HepG2 (cell line): ENCODE measurements at regions of chr14 and their contacts with region 1.

Region 1: DNA sequence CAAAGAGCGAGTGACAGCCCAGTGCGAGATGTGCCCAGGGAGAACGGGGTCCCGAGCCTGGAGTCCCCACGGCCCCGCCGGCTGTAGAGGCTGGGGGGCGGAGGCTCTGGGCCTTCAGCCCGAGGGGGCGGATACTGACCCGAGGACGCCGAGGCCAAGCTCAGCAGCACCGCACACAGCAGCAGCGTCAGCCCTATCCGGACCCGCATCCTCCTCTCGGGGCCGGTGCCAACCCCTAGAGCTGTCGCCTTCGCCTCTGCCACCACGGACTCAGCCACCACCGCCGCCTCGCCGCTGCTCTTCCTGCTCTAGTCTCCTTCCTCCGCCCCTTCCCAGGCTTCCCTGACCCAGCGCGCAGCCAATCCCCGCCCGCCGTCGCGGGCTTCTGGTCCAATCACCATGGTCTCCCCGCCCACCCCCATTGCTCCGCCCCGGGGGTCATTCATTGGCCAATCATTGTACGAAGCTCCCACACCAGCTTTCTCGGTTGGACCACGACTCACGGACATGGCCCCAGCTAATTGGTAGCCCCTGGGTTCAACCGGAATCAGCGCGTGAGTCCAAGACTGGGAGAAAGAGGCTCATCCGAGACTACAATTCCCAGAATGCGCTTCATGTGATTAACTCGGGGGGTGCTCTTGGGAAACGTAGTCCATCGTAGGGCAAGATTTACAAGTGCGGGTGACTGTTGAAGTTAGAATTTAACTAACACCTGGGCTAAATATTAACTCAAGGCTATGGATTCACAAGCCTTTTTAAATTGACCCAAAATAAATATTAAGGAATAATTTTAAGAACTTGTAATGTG is at the start of gene SEL1L:
- DNase-seq: peak; percentile 100
- ATAC-seq: peak; percentile 97
- H3K4me3 ChIP-seq: peak within 1 kb of the TSS; percentile 80 to 99 (median 83)
- H3K27ac ChIP-seq: peak within 1 kb of the TSS; percentile 72
- H3K4me1 ChIP-seq: peaks cover 73% of the 10 kb centered on the region
- H3K27me3 ChIP-seq: no peaks in the 10 kb centered on the region; a peak in 1 of 5 replicates
- CTCF ChIP-seq: no peak
- EP300 ChIP-seq: 0 out of 4 replicates have a peak, but pooled peaks of 1 of the 2 experiments have one; percentile 22
- POLR2A ChIP-seq: peak; percentile 93 to 95
- RAD21 ChIP-seq: peak; percentile 55; the same call in 1 of the 2 replicates
- total RNA-seq, gene SEL1L: 38.1 and 61.0 TPM in 2 replicates

Region 2: GRCh38 chr14:81423504-81423903 is 110.2 kb before region 1 on chr14:
- CTCF ChIA-PET with region 1: no interaction called
- POLR2A ChIA-PET with region 1: no interaction called
- in situ Hi-C with region 1: no loop called
- intact Hi-C with region 1: no loop called
- DNase-seq: no peak
- ATAC-seq: no peak
- H3K4me3 ChIP-seq: no peak overlapping the region
- H3K27ac ChIP-seq: no peak overlapping the region
- H3K4me1 ChIP-seq: no peaks in the 10 kb centered on the region
- H3K27me3 ChIP-seq: no peaks in the 10 kb centered on the region
- CTCF ChIP-seq: no peak
- EP300 ChIP-seq: no peak
- POLR2A ChIP-seq: no peak
- RAD21 ChIP-seq: no peak

Region 3: DNA sequence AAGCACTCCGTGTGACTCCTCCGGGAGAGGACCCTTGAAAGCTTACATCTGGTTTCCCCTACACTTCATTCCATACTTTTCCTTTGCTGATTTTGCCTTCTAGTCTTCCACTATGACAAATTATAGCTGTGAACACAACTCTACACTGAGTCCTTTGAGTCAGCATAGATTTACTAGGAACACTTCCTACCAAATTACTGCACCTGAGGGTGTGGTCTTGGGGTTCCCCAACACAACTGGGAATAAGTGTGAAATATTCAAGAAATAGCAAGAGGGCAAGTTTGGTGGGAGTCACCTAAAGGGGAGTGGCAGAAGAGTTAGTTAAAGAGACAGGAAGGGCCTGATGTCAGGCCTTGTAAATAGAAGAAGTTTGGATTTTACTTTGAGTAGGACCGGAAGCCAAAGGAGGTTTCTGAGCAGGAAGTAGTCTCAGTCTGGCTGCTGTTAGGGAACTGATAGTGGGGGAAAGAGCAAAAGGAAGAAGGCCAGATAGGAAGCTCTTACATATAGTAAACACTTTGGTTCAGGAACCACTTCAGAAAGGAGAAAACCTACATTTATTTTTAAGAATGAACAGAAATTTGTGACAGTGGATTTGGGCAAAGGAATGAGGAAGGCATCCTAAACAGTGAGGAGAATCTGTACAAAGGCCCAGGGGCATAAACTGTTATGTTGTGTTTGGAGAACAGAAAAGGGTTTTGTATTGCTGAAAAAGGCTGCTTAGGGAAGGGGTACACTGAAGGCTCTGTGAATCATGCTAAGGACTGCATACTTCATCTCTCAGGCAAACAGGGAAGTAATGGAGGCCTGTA is 14.3 kb before region 1 on chr14:
- CTCF ChIA-PET with region 1: no interaction called
- POLR2A ChIA-PET with region 1: interaction called, 27 read pairs
- in situ Hi-C with region 1: no loop called
- intact Hi-C with region 1: loop called (anchors 2 kb)
- DNase-seq: no peak
- ATAC-seq: no peak
- H3K4me3 ChIP-seq: no peak overlapping the region
- H3K27ac ChIP-seq: peak overlapping the region; percentile 77
- H3K4me1 ChIP-seq: peaks cover 49% of the 10 kb centered on the region
- H3K27me3 ChIP-seq: no peaks in the 10 kb centered on the region
- CTCF ChIP-seq: no peak
- EP300 ChIP-seq: no peak
- POLR2A ChIP-seq: no peak
- RAD21 ChIP-seq: no peak

Region 4: GRCh38 chr14:81565441-81566290 is 31.9 kb after region 1 on chr14:
- CTCF ChIA-PET with region 1: no interaction called
- POLR2A ChIA-PET with region 1: no interaction called
- in situ Hi-C with region 1: no loop called
- intact Hi-C with region 1: no loop called
- DNase-seq: peak; percentile 24
- ATAC-seq: peak; percentile 79
- H3K4me3 ChIP-seq: no peak overlapping the region
- H3K27ac ChIP-seq: no peak overlapping the region
- H3K4me1 ChIP-seq: no peaks in the 10 kb centered on the region
- H3K27me3 ChIP-seq: peaks cover 0 to 6% of the 10 kb centered on the region in 2 experiments; a peak in 1 of 5 replicates
- CTCF ChIP-seq: peak; percentile 75
- EP300 ChIP-seq: no peak
- POLR2A ChIP-seq: no peak
- RAD21 ChIP-seq: peak; percentile 29; the same call in 1 of the 2 replicates

Region 5: DNA sequence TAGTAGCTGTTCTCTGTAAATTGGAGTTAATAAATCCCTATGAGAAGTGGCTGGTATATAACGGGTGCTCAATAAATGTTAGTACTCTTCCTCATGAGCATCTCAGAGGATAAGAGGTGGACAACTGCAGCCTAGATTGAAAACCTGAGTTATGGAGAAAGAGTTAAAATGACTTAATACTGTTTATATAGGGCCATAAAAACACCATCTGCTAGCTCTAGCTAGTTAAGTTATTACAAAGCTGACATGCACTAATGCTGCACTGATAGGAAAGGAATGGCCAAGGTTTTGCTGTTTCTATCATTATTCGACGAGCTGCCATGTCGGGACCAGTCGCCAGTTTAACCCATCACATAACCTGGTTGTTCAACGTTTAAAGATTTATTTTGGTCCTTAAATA is 71.9 kb after region 1 on chr14:
- CTCF ChIA-PET with region 1: no interaction called
- POLR2A ChIA-PET with region 1: no interaction called
- in situ Hi-C with region 1: no loop called
- intact Hi-C with region 1: no loop called
- DNase-seq: no peak
- ATAC-seq: no peak
- H3K4me3 ChIP-seq: no peak overlapping the region
- H3K27ac ChIP-seq: no peak overlapping the region
- H3K4me1 ChIP-seq: peaks cover 3% of the 10 kb centered on the region
- H3K27me3 ChIP-seq: no peaks in the 10 kb centered on the region
- CTCF ChIP-seq: no peak
- EP300 ChIP-seq: no peak
- POLR2A ChIP-seq: no peak
- RAD21 ChIP-seq: no peak

Region 6: GRCh38 chr14:81715731-81716130 is 182.0 kb after region 1 on chr14:
- CTCF ChIA-PET with region 1: no interaction called
- POLR2A ChIA-PET with region 1: no interaction called
- in situ Hi-C with region 1: no loop called
- intact Hi-C with region 1: no loop called
- DNase-seq: no peak
- ATAC-seq: no peak
- H3K4me3 ChIP-seq: no peak overlapping the region
- H3K27ac ChIP-seq: no peak overlapping the region
- H3K4me1 ChIP-seq: no peaks in the 10 kb centered on the region
- H3K27me3 ChIP-seq: no peaks in the 10 kb centered on the region
- CTCF ChIP-seq: no peak
- EP300 ChIP-seq: no peak
- POLR2A ChIP-seq: no peak
- RAD21 ChIP-seq: no peak